CD4-positive, alpha-beta memory T cell (primary cell): ENCODE measurements at regions of chr6 and their contacts with region 1.

Region 1: GRCh38 chr6:56851541-56852259 is 103.2 kb upstream of the BEND6 start:
- DNase-seq: peak in 3 of 5 donors; percentile 11 to 32 (median 14)
- H3K4me3 ChIP-seq: no peak overlapping the region
- H3K4me3 Mint-ChIP-seq: peak overlapping the region; percentile 73 to 86 (median 75)
- H3K27ac ChIP-seq: no peak overlapping the region
- H3K27ac Mint-ChIP-seq: peak overlapping the region in 3 of 7 donors; percentile 2 to 64 (median 25)
- H3K4me1 ChIP-seq: peaks cover 9% of the 10 kb centered on the region
- H3K4me1 Mint-ChIP-seq: peaks cover 13 to 24% (median 17%) of the 10 kb centered on the region in 4 donors
- H3K27me3 ChIP-seq: peaks cover 3% of the 10 kb centered on the region
- H3K27me3 Mint-ChIP-seq: peaks cover 26 to 42% of the 10 kb centered on the region in 2 donors

Region 2: DNA sequence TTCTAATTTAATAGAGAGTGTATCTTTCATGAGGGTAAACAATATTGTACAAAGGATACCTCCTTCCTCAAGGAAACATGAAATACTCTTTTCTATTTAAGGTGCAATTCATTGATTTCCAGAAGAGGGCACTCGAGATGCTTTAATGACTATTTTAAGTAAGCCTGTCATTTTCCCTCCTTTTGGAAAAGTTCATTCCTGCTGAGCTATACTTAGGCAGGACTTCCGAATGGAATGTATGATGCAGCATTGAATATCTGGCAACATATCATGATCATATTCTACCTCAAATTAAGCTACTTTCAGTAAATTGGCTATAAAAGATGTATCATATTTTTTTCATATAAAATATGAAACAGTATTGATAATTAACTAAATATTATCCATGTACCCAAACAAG is 214.1 kb before region 1 on chr6:
- CTCF ChIA-PET with region 1: interaction called, 8 read pairs
- POLR2A ChIA-PET with region 1: no interaction called
- intact Hi-C with region 1: loop called (anchors 1 kb)
- DNase-seq: peak in 2 of 5 donors; percentile 1 to 3
- H3K4me3 ChIP-seq: no peak overlapping the region
- H3K4me3 Mint-ChIP-seq: no peak overlapping the region
- H3K27ac ChIP-seq: no peak overlapping the region
- H3K27ac Mint-ChIP-seq: no peak overlapping the region
- H3K4me1 ChIP-seq: no peaks in the 10 kb centered on the region
- H3K4me1 Mint-ChIP-seq: no peaks in the 10 kb centered on the region
- H3K27me3 ChIP-seq: no peaks in the 10 kb centered on the region
- H3K27me3 Mint-ChIP-seq: no peaks in the 10 kb centered on the region

Region 3: GRCh38 chr6:56708810-56709597 is 142.7 kb before region 1 on chr6:
- CTCF ChIA-PET with region 1: interaction called, 8 read pairs
- POLR2A ChIA-PET with region 1: no interaction called
- intact Hi-C with region 1: loop called (anchors 2 kb)
- DNase-seq: peak in 1 of 5 donors; percentile 18
- H3K4me3 ChIP-seq: no peak overlapping the region
- H3K4me3 Mint-ChIP-seq: no peak overlapping the region
- H3K27ac ChIP-seq: no peak overlapping the region
- H3K27ac Mint-ChIP-seq: no peak overlapping the region
- H3K4me1 ChIP-seq: no peaks in the 10 kb centered on the region
- H3K4me1 Mint-ChIP-seq: no peaks in the 10 kb centered on the region
- H3K27me3 ChIP-seq: no peaks in the 10 kb centered on the region
- H3K27me3 Mint-ChIP-seq: peaks cover 2 to 3% of the 10 kb centered on the region in 2 donors